ENCODE measurements at regions of chr9 and their contacts with region 1.

Region 1: GRCh38 chr9:120936011-120936763 is 9.6 kb upstream of the TRAF1 start:
- DNase-seq: peak; percentile 65 to 93 (median 82)
- ATAC-seq: peak; percentile 66 to 76 (median 74)
- H3K4me3 ChIP-seq: peak overlapping the region in 1 of 2 donors; percentile 11
- H3K4me3 Mint-ChIP-seq: peak overlapping the region; percentile 47 to 60 (median 53)
- H3K27ac ChIP-seq: peak overlapping the region; percentile 75
- H3K27ac Mint-ChIP-seq: peak overlapping the region; percentile 95 to 100
- H3K4me1 ChIP-seq: peaks cover 50 to 56% of the 10 kb centered on the region in 2 experiments
- H3K4me1 Mint-ChIP-seq: peaks cover 58 to 64% (median 59%) of the 10 kb centered on the region in 3 donors
- H3K27me3 ChIP-seq: no peaks in the 10 kb centered on the region
- H3K27me3 Mint-ChIP-seq: no peaks in the 10 kb centered on the region

Region 2: DNA sequence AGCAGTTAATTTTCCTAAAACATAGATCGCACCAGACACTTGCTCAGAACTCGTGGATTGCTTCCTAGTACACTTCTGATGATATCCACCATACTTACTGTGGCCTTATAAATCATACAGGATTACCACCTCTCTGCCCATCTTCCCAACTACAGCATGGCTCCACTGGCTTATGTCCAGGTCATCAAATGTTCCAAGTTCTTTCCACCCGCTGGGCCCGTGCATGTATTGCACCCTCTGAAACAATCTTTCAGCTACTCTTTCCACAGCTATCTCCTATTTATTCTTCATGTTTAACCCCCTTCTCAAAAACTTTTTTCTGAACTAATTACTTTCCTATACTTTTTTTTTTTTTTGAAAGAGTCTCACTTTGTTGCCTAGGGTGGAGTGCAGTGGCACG is 161.5 kb before region 1 on chr9:
- CTCF ChIA-PET with region 1: no interaction called
- POLR2A ChIA-PET with region 1: no interaction called
- DNase-seq: no peak
- ATAC-seq: no peak
- H3K4me3 ChIP-seq: no peak overlapping the region
- H3K4me3 Mint-ChIP-seq: no peak overlapping the region
- H3K27ac ChIP-seq: no peak overlapping the region
- H3K27ac Mint-ChIP-seq: no peak overlapping the region
- H3K4me1 ChIP-seq: peaks cover 0 to under 1% of the 10 kb centered on the region in 2 experiments
- H3K4me1 Mint-ChIP-seq: peaks cover 5 to 13% (median 5%) of the 10 kb centered on the region in 3 donors
- H3K27me3 ChIP-seq: no peaks in the 10 kb centered on the region
- H3K27me3 Mint-ChIP-seq: no peaks in the 10 kb centered on the region

Region 3: DNA sequence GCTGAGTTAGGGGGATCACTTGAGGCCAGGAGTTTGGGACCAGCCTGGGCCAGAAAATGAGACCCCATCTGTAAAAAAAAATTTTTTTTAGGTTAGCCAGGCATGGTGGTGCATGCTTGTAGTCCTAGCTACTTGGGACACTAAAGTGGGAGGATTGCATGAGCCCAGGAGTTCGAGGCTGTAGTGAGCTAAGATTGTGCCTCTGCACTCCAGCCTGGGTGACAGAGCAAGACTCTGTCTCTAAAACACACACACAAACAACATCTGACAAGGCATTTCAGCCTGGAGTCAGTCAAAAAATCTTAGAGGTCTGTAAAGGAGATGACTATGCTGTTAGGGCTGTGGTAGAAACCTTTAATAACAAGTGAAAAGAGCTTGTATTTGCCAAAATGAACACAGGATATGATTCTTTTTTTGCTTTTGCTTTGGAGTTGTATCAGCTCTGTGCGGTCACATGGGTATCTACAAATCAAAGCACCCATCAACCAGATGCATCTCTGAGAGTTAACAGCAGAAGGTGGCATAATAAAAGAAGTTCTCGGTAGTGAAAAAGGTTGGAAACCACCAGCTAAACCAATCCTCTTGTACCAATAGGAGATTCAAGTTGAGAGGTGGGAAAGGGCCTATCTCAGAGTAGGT is 89.8 kb before region 1 on chr9:
- CTCF ChIA-PET with region 1: interaction called, 3 to 13 read pairs
- POLR2A ChIA-PET with region 1: interaction called, 5 to 6 read pairs
- DNase-seq: peak in 21 of 35 experiments; percentile 15 to 82 (median 39)
- ATAC-seq: peak; percentile 53 to 72 (median 60)
- H3K4me3 ChIP-seq: no peak overlapping the region
- H3K4me3 Mint-ChIP-seq: peak overlapping the region; percentile 45 to 99 (median 49)
- H3K27ac ChIP-seq: peak overlapping the region; percentile 71
- H3K27ac Mint-ChIP-seq: peak overlapping the region; percentile 97
- H3K4me1 ChIP-seq: peaks cover 44 to 45% of the 10 kb centered on the region in 2 experiments
- H3K4me1 Mint-ChIP-seq: peaks cover 70 to 75% (median 71%) of the 10 kb centered on the region in 3 donors
- H3K27me3 ChIP-seq: no peaks in the 10 kb centered on the region
- H3K27me3 Mint-ChIP-seq: no peaks in the 10 kb centered on the region

Region 4: GRCh38 chr9:120868676-120869359 is 67.4 kb before region 1 on chr9:
- CTCF ChIA-PET with region 1: interaction called, 5 to 39 read pairs
- POLR2A ChIA-PET with region 1: interaction called, 5 to 11 read pairs
- DNase-seq: peak; percentile 91 to 98 (median 96)
- ATAC-seq: peak; percentile 86 to 88 (median 87)
- H3K4me3 ChIP-seq: peak overlapping the region; percentile 57 to 59
- H3K4me3 Mint-ChIP-seq: peak overlapping the region; percentile 79 to 89 (median 82)
- H3K27ac ChIP-seq: peak overlapping the region; percentile 83
- H3K27ac Mint-ChIP-seq: peak overlapping the region; percentile 94 to 97
- H3K4me1 ChIP-seq: peaks cover 9 to 34% of the 10 kb centered on the region in 2 experiments
- H3K4me1 Mint-ChIP-seq: peaks cover 29 to 43% (median 36%) of the 10 kb centered on the region in 3 donors
- H3K27me3 ChIP-seq: no peaks in the 10 kb centered on the region
- H3K27me3 Mint-ChIP-seq: no peaks in the 10 kb centered on the region

Region 5: DNA sequence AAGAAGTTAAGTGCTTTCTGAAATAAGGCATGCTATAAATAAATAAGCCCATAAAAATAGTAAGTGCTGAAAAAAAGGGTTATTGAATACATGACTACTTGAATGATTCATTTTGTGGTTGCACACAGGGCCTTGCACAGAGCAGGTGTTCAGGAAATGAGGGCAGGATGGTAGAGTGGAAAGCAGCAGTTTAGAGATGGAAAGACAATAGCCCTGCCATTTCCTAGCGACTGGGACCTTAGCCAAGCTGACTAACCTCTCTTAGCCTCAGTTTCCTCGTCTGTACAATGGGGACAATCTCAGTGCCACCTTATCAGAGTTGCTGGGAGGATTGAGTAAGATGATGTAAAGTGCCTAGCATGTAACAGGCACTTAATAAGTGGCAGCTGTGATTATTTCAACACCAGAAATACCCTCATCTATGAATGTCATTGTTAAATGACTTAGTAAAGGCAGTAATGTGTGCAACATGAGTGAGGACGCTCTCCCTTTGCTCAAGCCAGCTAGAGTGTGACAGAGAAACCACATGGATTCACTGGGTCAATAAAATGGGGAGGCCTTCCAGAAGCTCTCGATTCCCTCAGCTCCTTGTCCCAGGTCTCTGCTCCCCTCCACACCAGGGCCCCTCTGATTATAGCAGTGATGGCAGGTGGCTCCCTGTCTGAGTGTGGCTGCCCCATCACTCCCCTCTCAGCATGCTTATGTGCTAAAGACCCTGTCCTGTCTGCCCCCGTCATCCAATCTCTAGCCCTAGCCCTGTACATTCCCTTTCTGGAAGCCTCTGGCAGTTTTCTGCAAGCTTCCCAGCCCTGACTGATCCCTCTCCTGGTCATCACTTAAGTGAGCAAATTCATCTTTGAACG is 43.2 kb before region 1 on chr9:
- CTCF ChIA-PET with region 1: interaction called, 3 to 26 read pairs
- POLR2A ChIA-PET with region 1: interaction called in 1 of 2 experiments, 31 read pairs
- DNase-seq: peak in 25 of 35 experiments; percentile 37 to 79 (median 51)
- ATAC-seq: peak; percentile 50 to 62 (median 58)
- H3K4me3 ChIP-seq: no peak overlapping the region
- H3K4me3 Mint-ChIP-seq: peak overlapping the region in 2 of 3 donors; percentile 64 to 69
- H3K27ac ChIP-seq: peak overlapping the region; percentile 96
- H3K27ac Mint-ChIP-seq: peak overlapping the region; percentile 98
- H3K4me1 ChIP-seq: peaks cover 50 to 93% of the 10 kb centered on the region in 2 experiments
- H3K4me1 Mint-ChIP-seq: peaks cover 64 to 90% (median 85%) of the 10 kb centered on the region in 3 donors
- H3K27me3 ChIP-seq: no peaks in the 10 kb centered on the region
- H3K27me3 Mint-ChIP-seq: no peaks in the 10 kb centered on the region

Region 6: DNA sequence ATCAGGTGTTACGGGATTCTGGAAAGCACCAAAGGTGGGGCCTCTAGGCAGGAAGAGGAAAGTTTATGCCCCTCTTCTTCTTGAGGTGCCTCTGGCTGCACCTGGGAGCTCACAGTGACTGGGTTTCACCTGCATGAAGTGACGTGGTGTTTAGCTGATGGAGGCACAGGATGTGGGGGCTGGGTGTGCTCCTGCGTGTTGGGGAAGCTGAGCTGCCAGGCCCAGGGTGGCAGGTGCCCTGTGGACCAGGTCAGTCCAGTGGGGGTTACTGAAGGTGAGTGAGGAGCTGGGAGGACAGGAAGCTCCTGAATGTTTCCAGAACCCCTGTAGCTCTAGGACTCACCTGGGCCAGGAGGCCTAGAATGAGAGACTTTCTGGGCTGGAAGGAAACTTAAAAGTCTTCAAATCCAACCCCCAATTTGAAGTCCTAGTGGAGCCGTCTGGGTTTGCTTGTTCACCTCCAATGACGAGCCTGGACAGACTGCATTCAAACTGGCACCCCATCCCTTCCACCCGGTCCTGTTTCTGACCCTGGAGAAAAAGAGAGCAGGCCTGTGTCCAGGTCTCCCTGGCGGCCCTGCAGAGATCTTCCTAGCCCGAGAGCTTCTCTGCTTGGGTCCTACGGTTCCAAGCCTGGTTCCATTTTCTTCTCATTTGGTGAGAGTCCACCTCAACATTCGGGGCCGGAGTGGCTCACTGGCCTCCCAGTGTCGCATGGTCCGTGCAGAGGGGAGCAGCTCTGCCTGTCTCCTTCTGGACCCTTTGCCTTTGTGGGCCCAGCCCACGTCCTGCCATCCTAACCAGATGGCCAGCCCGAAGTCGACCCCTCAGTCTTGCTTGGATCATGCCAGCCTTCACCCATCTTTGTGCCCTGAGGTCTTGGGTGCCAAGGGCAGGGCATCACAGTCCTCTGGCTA is 31.9 kb before region 1 on chr9:
- CTCF ChIA-PET with region 1: interaction called in 1 of 2 experiments, 5 read pairs
- POLR2A ChIA-PET with region 1: interaction called, 8 to 11 read pairs
- DNase-seq: peak; percentile 45 to 89 (median 78)
- ATAC-seq: peak; percentile 83 to 89 (median 86)
- H3K4me3 ChIP-seq: no peak overlapping the region
- H3K4me3 Mint-ChIP-seq: peak overlapping the region in 2 of 3 donors; percentile 56 to 76
- H3K27ac ChIP-seq: peak overlapping the region; percentile 94
- H3K27ac Mint-ChIP-seq: peak overlapping the region; percentile 97 to 99
- H3K4me1 ChIP-seq: peaks cover 38 to 88% of the 10 kb centered on the region in 2 experiments
- H3K4me1 Mint-ChIP-seq: peaks cover 87 to 90% (median 89%) of the 10 kb centered on the region in 3 donors
- H3K27me3 ChIP-seq: no peaks in the 10 kb centered on the region
- H3K27me3 Mint-ChIP-seq: no peaks in the 10 kb centered on the region

Region 7: DNA sequence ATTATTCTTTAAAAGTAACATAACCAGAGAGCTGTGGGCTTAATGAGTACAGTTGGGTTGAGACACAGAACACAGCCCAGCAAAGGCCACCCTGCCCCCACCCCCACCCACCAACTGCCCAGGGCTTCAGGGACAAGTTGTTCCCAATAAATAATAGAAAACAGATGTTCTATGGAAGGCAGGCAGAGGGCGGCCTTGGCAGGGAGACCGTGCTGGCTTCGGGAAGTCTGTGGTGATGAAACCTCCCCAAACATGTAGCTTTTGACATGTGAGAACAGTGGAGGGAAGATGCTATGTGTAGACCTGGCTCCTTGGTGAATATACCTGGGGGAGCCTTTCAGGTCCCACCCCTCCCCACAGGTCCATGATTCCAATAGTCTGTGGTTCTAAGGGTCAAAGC is 19.6 kb before region 1 on chr9:
- CTCF ChIA-PET with region 1: interaction called in 1 of 2 experiments, 11 read pairs
- POLR2A ChIA-PET with region 1: interaction called, 5 to 9 read pairs
- DNase-seq: no peak
- ATAC-seq: no peak
- H3K4me3 ChIP-seq: no peak overlapping the region
- H3K4me3 Mint-ChIP-seq: peak overlapping the region; percentile 29 to 72 (median 55)
- H3K27ac ChIP-seq: peak overlapping the region; percentile 52
- H3K27ac Mint-ChIP-seq: peak overlapping the region; percentile 88 to 93
- H3K4me1 ChIP-seq: peaks cover 25 to 88% of the 10 kb centered on the region in 2 experiments
- H3K4me1 Mint-ChIP-seq: peaks cover 85 to 90% (median 90%) of the 10 kb centered on the region in 3 donors
- H3K27me3 ChIP-seq: no peaks in the 10 kb centered on the region
- H3K27me3 Mint-ChIP-seq: no peaks in the 10 kb centered on the region

Region 8: DNA sequence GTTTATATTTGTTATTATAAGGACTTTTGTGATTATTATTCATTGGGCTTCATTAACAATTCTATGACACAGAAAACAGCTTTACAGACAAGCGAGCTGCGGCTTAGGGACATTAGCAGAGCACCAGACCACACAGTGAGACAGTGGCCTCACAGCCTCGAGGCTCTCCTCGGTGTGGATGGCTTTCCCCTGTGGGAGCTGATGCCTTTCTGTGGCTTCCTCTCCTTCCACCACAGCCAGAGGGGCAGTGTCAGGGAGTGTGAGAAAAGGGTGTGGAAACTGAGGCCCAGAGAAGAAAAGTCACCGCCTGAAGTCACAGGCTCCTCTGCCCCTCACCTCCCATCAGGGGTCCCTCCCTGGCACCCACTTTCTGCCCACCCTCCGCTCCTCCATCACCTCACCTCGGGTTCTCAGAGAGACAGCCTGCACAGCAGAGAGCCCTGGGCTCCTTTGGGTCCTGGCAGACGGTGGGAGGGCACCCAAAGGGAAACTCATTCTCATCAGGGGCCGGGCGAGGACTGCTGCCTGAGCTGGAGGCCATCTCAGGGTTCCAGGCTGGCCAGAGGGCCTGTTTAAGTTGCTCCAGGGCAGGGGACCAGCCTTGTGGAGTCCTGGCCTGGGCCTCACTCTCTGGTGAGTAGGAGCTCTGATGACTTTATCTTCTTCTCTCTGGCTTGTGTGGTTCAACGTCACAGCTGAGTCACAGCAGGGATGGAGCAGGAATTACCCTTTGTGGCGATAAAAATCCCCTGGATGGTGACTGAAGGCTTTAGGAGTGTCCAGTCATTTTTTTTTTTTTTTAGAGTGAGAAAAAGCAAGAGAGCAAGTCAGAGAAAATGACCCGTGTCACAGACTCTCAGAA is 10.4 kb before region 1 on chr9:
- CTCF ChIA-PET with region 1: interaction called in 1 of 2 experiments, 12 read pairs
- POLR2A ChIA-PET with region 1: interaction called, 5 to 6 read pairs
- DNase-seq: peak in 32 of 35 experiments; percentile 40 to 88 (median 62)
- ATAC-seq: peak; percentile 20 to 64 (median 26)
- H3K4me3 ChIP-seq: peak overlapping the region; percentile 53 to 81
- H3K4me3 Mint-ChIP-seq: peak overlapping the region; percentile 94 to 96 (median 95)
- H3K27ac ChIP-seq: peak overlapping the region; percentile 99
- H3K27ac Mint-ChIP-seq: peak overlapping the region; percentile 98 to 99
- H3K4me1 ChIP-seq: peaks cover 31 to 94% of the 10 kb centered on the region in 2 experiments
- H3K4me1 Mint-ChIP-seq: peaks cover 89 to 91% (median 91%) of the 10 kb centered on the region in 3 donors
- H3K27me3 ChIP-seq: no peaks in the 10 kb centered on the region
- H3K27me3 Mint-ChIP-seq: no peaks in the 10 kb centered on the region

Region 9: DNA sequence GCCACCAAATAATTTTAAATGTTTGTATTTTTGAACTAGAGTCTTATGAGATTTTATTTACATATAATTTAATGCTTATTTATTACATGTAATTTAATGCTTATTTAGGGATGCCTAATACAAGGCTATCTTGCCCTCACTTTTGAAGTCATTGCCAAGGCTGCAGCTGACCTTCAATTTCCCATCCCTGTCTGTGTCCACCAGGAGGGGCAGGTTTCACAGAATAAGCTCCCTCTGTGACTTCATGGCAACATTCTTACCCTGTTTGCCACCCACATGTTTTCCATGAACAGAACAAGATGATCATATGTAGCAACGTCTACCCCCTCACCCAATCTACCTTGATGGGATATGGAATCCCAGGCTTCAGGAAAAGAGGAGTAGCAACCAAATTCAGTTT is 86.9 kb after region 1 on chr9:
- CTCF ChIA-PET with region 1: no interaction called
- POLR2A ChIA-PET with region 1: no interaction called
- DNase-seq: no peak
- ATAC-seq: no peak
- H3K4me3 ChIP-seq: no peak overlapping the region
- H3K4me3 Mint-ChIP-seq: no peak overlapping the region
- H3K27ac ChIP-seq: no peak overlapping the region
- H3K27ac Mint-ChIP-seq: no peak overlapping the region
- H3K4me1 ChIP-seq: no peaks in the 10 kb centered on the region
- H3K4me1 Mint-ChIP-seq: no peaks in the 10 kb centered on the region
- H3K27me3 ChIP-seq: no peaks in the 10 kb centered on the region
- H3K27me3 Mint-ChIP-seq: no peaks in the 10 kb centered on the region

Measured in T-cell (primary cell).